Aorta (tissue), 5 donors: ENCODE measurements at regions of chr14 and their contacts with region 1.

Region 1: GRCh38 chr14:23301288-23301968 is 1.2 kb downstream of the PPP1R3E start:
- DNase-seq: peak; percentile 99
- ATAC-seq: peak; percentile 93
- H3K4me3 ChIP-seq: peak overlapping the region; percentile 73 to 82
- H3K27ac ChIP-seq: peak overlapping the region; percentile 92 to 98
- H3K4me1 ChIP-seq: peaks cover 0 to 2% of the 10 kb centered on the region in 2 donors
- H3K27me3 ChIP-seq: no peaks in the 10 kb centered on the region

Region 2: DNA sequence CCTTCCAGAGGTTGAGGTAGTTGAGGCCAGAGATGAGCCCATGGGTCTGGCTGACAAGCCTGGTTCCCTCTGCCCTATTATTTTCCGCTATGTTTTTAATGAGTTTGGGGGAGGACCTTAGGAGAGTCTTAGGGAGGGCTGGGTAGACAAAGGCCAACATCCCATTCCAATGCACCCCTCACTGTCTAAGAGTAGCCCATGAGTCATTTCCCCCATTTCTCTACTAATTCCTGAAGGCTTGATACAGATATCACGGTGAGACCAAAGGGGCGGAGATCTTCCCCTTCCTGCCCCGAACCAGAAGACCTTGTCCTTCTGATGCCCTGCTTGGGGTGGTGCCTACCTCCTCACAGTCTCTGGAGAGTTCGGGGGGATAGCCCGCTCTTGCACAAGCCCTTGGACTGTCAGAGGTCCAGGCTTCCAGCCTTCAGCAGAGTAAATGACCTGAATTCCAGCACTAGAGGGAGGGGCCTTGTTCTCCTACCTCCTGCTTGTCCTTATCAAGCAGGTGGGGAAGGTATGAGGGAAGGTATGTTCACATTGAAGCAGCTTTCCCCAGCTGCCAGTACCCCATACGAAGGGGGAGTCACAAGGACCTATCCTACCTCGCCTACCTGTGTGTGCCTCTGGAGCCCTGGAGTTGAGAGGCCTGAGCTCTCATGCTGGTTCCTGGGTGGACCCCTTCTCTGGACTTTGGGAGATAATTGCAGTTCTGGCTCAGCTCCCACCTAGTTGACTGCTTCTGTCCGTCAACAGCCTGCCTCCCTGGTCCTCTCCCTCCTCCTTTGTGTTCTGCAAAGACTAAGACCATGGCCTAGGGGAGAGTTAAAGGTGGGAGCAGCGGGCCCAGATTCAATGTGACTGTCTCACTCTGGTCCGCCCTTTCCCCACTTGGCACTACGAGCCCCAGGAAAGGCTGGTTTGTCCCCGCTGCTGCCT is 255.7 kb before region 1 on chr14:
- intact Hi-C with region 1: no loop called
- DNase-seq: peak in 1 of 2 donors; percentile 48
- ATAC-seq: no peak
- H3K4me3 ChIP-seq: no peak overlapping the region
- H3K27ac ChIP-seq: no peak overlapping the region
- H3K4me1 ChIP-seq: no peaks in the 10 kb centered on the region
- H3K27me3 ChIP-seq: no peaks in the 10 kb centered on the region

Region 3: DNA sequence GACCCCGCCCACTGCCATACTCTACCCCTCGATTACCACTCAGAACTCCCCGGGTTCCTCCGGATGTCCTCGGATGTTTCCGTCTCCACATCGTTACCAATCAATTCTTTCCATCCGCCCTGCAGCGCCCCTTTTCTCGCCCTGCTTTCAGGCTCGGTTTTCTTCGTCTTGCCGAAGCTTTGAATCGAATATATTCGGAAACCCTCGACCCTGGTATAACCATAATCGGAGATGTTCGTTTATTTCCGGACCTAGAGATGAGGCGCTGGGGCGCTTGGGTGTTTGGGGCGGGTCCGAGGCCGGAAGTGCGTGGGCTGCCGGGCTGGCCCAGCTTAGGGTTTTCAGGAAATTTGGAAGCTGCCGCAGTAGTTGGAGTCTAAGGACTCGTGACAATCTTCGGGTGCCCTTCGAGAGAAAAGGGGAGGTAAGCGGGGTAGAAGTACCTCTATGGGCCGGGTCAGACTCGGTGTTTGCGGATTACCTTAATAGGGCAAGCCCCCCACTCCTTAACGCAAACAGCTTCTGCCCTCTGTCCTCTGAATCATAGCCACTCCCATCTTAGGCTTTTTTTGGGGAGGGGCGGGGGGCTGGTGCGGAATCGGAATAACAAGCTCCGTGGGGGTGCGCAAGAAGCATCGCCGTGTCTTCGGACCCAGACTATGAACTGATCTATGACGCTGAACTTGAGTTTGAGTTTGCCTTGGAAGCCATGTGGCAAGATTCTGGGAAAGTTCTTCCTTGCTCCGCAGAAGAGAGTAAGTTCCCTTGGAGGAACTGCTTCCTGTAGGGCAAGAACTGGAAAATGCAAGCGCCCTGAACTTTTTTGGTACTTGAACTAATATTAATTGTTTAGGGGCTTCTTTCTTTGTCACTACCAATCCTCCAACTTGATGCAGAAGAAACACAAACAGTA is 206.0 kb before region 1 on chr14 and contains the start of gene C14orf119:
- intact Hi-C with region 1: loop called in 1 of 2 experiments (anchors 2 kb)
- DNase-seq: peak; percentile 96 to 100
- ATAC-seq: peak; percentile 98
- H3K4me3 ChIP-seq: peak within 1 kb of the TSS; percentile 62 to 68
- H3K27ac ChIP-seq: peak within 1 kb of the TSS in 1 of 2 donors; percentile 92
- H3K4me1 ChIP-seq: peaks cover 0 to 11% of the 10 kb centered on the region in 2 donors
- H3K27me3 ChIP-seq: no peaks in the 10 kb centered on the region
- total RNA-seq, gene C14orf119: 37.6 to 41.4 TPM